ENCODE measurements at regions of chr20 and their contacts with region 1.

Region 1: GRCh38 chr20:45450097-45450818 is 19.3 kb upstream of the WFDC2 start:
- DNase-seq: peak; percentile 32
- CTCF ChIP-seq: peak; percentile 49

Region 2: GRCh38 chr20:45300961-45301360 is 149.3 kb before region 1 on chr20:
- CTCF ChIA-PET with region 1: no interaction called
- POLR2A ChIA-PET with region 1: no interaction called
- DNase-seq: peak; percentile 48
- CTCF ChIP-seq: peak; percentile 41

Region 3: DNA sequence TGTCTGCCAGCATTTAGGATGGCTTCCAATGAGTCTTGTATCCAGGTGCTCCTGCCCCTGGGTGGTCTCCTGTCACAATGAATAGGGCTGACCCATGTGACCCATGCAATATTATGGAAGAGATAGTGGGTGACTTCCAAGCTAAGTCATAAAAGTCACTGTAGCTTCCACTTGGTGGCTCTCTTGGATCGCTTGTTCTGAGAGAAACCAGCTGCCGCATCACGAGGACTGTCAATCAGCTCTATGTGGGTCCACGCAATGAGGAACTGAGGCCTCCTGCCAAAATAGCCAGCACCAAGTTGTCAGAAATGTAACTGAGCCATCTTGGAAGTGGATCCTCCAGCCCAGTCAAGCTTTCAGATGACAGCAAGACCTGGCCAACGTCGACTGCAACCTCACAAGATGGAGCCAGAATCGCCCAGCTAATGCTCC is 127.3 kb before region 1 on chr20:
- CTCF ChIA-PET with region 1: interaction called, 12 read pairs
- POLR2A ChIA-PET with region 1: no interaction called
- DNase-seq: peak; percentile 63
- CTCF ChIP-seq: peak; percentile 15

Region 4: DNA sequence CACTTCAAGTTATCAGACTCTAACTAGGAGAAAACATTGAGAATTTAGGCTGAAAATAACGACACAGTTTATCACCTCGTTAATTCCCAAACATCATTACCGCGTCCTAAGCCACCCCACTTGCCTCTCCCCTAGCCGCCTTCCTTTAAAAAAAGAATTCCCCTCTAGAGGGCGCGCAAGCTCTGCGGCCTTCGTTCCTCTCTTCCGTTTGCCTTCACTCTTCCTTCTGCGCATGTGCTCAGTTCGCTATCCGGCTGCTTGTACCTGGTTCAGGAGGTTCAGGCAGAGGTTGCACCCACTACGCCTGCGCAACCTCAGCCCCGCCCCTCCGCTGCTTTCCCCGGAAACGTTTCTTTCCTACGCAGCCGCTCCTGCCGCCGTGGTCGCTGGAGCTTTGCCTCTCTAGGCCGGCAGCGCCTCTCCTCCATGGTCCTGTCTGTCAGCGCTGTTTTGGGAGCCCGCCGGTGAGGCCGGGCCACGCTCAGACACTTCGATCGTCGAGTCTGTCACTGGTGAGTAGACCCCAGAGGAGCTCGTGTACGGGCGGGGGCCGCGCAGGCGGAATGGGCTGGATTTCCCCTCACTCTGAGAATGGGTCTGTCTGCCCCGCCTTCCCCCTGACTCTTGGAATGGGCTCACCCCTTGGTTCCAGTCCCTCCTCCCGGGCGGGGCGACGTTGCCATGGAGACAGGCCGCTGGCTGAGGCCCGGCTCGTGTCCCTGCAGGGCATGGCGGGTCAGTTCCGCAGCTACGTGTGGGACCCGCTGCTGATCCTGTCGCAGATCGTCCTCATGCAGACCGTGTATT is 87.3 kb before region 1 on chr20 and contains the start of gene SYS1:
- CTCF ChIA-PET with region 1: interaction called, 74 read pairs
- POLR2A ChIA-PET with region 1: no interaction called
- DNase-seq: peak; percentile 96
- CTCF ChIP-seq: peak; percentile 74

Region 5: GRCh38 chr20:45368221-45368980 is 81.9 kb before region 1 on chr20:
- CTCF ChIA-PET with region 1: interaction called, 74 read pairs
- POLR2A ChIA-PET with region 1: no interaction called
- DNase-seq: peak; percentile 86
- CTCF ChIP-seq: peak; percentile 6

Region 6: DNA sequence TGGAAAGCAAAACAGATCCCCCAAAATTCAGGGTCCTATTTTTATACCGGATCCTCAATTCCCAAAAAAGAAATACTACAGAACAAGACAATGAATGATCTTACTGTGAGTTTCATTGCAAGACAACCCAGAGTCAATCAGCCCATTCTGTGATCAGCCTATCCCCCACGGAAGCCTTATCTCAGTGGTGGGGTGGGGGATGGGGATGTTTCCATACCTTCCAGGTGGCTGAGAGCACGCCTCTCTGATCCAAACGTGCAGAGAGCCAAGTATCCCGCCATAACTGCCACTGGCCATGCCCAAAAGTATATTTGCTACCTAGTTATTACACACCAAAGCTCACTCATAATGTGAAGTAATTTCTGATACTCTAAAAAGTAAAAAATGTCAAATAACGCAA is 34.4 kb after region 1 on chr20:
- CTCF ChIA-PET with region 1: no interaction called
- POLR2A ChIA-PET with region 1: no interaction called
- DNase-seq: no peak
- CTCF ChIP-seq: no peak

Region 7: DNA sequence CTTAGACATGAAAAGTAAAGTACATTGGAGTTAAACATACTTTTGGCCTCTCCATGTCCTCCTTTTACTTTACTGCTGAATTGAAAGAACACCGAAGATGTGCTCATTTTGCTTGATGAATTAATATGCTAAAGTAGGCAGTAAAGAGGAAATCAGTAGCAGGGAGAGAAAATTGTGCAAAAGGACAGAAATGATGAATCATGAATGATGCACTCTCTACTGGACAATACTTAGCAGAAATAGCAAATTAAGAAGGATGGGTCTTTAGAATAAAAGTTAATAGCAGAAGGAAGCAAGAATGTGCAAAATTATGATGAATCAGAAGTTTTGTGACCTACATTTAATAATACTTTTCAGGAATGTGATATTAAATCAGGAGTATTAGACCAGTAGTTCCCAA is 73.6 kb after region 1 on chr20:
- CTCF ChIA-PET with region 1: no interaction called
- POLR2A ChIA-PET with region 1: no interaction called
- DNase-seq: no peak
- CTCF ChIP-seq: no peak

Region 8: DNA sequence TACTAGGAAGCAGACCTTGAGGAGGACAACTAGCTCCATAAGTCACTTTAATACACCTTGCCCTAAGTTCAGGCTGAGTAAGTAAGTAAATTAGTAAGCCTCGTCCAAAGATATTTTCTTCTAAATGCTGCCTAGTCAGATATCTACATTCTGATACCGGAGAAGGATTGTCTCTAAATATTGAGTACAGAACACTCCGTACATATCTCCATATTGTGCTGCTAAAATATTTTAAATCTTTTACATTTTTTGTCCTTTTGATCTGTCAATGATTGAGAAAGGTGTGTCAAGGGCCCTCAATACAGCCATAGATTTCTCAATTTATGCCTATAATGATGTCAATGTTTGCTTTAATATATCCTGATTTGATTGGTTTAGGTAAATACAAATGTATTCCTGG is 125.7 kb after region 1 on chr20:
- CTCF ChIA-PET with region 1: no interaction called
- POLR2A ChIA-PET with region 1: no interaction called
- DNase-seq: no peak
- CTCF ChIP-seq: no peak

Region 9: GRCh38 chr20:45934586-45935415 is 484.5 kb after region 1 on chr20 and contains the start of gene PCIF1:
- CTCF ChIA-PET with region 1: no interaction called
- POLR2A ChIA-PET with region 1: interaction called, 10 read pairs
- DNase-seq: peak; percentile 99
- CTCF ChIP-seq: no peak